Calu3 (cell line): ENCODE measurements at regions of chr12 and their contacts with region 1.

Region 1: DNA sequence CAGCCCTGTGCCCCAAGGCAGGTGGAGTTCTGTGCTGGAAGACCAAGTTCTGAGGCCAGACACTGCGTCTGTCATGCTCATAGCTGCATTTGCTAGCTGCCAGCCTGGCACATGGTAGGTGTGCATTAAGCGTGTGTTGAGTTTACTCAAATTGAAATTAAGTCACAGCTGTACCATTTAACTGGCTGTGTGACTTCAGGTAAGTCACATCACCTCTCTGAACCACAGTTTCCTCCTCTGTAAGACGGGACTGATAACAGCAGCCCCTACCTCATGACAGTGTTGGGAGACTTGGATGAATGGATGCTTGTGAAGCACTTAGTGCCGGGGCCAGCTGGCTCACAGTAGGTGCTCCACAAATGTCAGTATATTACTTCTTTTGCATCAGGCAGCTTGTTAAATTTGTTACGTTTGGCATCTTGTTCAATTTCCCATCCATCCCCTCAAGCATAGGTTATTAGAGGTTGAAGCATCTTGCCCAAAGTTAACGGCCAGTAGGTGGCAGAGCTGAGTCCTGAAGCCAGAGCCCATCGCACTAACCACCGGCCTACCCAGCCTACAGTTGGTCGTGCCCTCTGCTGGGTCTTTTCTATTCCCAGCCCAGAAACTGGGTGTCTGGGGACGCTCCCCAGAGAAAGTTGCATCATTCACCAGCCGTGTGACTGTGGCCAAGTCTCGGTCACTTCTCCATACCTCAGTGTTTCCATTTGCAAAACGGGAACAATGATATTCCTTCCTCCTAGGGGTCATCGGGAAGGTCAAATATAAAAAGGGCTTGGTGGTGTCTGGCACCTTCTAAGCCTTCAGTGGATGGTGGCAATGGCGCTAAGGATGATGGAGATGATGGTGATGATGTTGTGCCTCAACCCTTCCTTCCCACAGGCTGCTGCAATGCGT is 4.5 kb downstream of the DAO start:
- DNase-seq: peak; percentile 68
- H3K4me3 Mint-ChIP-seq: no peak overlapping the region
- H3K27ac Mint-ChIP-seq: no peak overlapping the region
- H3K4me1 Mint-ChIP-seq: no peaks in the 10 kb centered on the region
- H3K27me3 Mint-ChIP-seq: peaks cover 8% of the 10 kb centered on the region
- CTCF ChIP-seq: peak; percentile 66

Region 2: DNA sequence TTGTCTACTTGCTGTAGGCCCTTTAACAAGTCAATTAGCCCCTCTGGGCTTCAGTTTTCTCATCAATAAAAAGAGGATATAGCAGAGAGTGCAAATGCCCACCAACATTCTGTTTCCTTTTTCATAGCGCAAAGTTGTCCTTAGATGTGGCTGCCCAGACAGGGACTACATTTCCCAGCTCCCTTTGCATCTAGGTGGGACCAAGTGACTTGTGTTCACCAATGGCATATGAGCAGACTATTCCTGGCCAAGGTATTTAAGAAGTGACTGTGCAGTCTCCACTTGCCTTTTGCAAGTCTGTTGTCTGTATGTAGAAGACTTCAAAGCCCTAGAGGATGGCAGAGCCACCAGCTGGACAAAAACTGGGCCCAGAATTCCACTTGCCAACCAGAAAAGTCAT is 55.2 kb after region 1 on chr12:
- CTCF ChIA-PET with region 1: no interaction called
- intact Hi-C with region 1: loop called (anchors 5 kb)
- DNase-seq: peak; percentile 26
- H3K4me3 Mint-ChIP-seq: no peak overlapping the region
- H3K27ac Mint-ChIP-seq: no peak overlapping the region
- H3K4me1 Mint-ChIP-seq: no peaks in the 10 kb centered on the region
- H3K27me3 Mint-ChIP-seq: peaks cover 70% of the 10 kb centered on the region
- CTCF ChIP-seq: no peak